B cell (primary cell): ENCODE measurements at regions of chr15 and their contacts with region 1.

Region 1: GRCh38 chr15:60478566-60479360 is at the start of gene ICE2:
- DNase-seq: peak; percentile 95
- ATAC-seq: peak; percentile 93
- H3K4me3 ChIP-seq: peak within 1 kb of the TSS; percentile 76 to 97 (median 89)
- H3K4me3 Mint-ChIP-seq: peak within 1 kb of the TSS; percentile 99
- H3K27ac ChIP-seq: peak within 1 kb of the TSS; percentile 85 to 95
- H3K27ac Mint-ChIP-seq: peak within 1 kb of the TSS; percentile 97
- H3K4me1 ChIP-seq: peaks cover 23 to 28% of the 10 kb centered on the region in 2 donors
- H3K4me1 Mint-ChIP-seq: peaks cover 52% of the 10 kb centered on the region
- H3K27me3 ChIP-seq: no peaks in the 10 kb centered on the region
- H3K27me3 Mint-ChIP-seq: no peaks in the 10 kb centered on the region
- CTCF ChIP-seq: no peak
- total RNA-seq, gene ICE2: 65.9 and 71.2 TPM in 2 replicates

Region 2: DNA sequence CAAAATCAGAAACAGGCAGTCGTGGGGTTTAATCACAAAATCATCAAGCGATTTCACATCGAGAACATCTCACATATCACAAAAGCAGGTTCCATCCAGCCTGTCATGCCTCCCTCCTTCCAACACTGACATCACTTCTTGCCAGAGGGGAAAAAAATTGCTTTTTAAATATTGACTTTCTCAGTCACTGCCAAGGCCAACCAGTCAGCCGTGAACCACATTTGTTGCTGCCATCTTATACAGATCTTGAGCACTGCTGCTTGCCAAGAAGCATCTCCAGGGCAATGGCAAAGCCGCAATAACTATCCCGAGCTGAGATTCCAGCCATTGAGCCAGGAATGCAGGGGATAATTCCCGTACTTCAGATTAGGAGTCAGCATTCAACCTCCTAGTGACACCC is 255.6 kb before region 1 on chr15:
- CTCF ChIA-PET with region 1: no interaction called
- POLR2A ChIA-PET with region 1: no interaction called
- intact Hi-C with region 1: no loop called
- DNase-seq: no peak
- ATAC-seq: no peak
- H3K4me3 ChIP-seq: no peak overlapping the region
- H3K4me3 Mint-ChIP-seq: no peak overlapping the region
- H3K27ac ChIP-seq: no peak overlapping the region
- H3K27ac Mint-ChIP-seq: no peak overlapping the region
- H3K4me1 ChIP-seq: no peaks in the 10 kb centered on the region
- H3K4me1 Mint-ChIP-seq: no peaks in the 10 kb centered on the region
- H3K27me3 ChIP-seq: no peaks in the 10 kb centered on the region
- H3K27me3 Mint-ChIP-seq: peaks cover 12% of the 10 kb centered on the region
- CTCF ChIP-seq: no peak

Region 3: DNA sequence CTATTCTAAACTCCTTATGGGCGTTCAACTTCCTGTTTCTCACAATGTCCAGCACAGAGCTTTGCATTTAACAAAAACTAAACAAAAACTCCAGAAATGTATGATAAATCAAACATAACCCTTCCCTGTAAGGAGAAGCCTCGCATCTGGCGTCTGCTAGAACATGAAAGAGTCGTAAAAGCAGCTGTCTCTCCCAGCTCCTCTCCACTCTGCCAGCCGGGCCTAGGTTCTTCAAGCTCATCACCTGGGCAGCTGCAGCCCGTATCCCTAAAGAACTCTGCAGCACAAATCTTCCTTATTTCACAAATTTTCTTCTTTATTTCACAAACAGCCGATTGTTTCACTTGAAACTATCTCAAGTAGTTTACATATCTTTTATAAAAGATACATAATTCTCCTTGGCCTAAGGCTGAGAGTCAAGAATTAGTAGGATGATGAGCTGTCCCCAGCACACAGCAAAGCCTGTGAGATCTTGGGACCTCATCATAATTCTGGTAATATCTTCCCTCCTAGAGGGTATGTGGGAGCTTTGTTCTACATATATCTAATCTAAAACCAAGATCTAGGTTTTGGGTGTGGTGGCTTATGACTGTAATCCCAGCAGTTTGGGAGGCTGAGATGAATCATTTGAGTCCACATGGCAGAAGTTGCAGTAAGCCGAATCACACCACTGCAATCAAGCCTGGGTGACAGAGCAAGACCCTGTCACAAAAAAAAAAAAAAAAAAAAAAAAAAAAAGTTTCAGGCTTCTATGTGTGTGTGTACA is 116.3 kb before region 1 on chr15:
- CTCF ChIA-PET with region 1: interaction called, 4 read pairs
- POLR2A ChIA-PET with region 1: no interaction called
- intact Hi-C with region 1: loop called (anchors 1 kb)
- DNase-seq: no peak
- ATAC-seq: no peak
- H3K4me3 ChIP-seq: no peak overlapping the region
- H3K4me3 Mint-ChIP-seq: no peak overlapping the region
- H3K27ac ChIP-seq: no peak overlapping the region
- H3K27ac Mint-ChIP-seq: peak overlapping the region; percentile 22
- H3K4me1 ChIP-seq: no peaks in the 10 kb centered on the region
- H3K4me1 Mint-ChIP-seq: no peaks in the 10 kb centered on the region
- H3K27me3 ChIP-seq: no peaks in the 10 kb centered on the region
- H3K27me3 Mint-ChIP-seq: no peaks in the 10 kb centered on the region
- CTCF ChIP-seq: no peak

Region 4: GRCh38 chr15:60397772-60398445 is 80.9 kb before region 1 on chr15 and contains the start of gene ANXA2:
- CTCF ChIA-PET with region 1: interaction called, 4 read pairs
- POLR2A ChIA-PET with region 1: interaction called, 18 read pairs
- intact Hi-C with region 1: loop called (anchors 1 kb)
- DNase-seq: peak; percentile 83
- ATAC-seq: peak; percentile 79
- H3K4me3 ChIP-seq: peak within 1 kb of the TSS; percentile 42 to 82 (median 72)
- H3K4me3 Mint-ChIP-seq: peak within 1 kb of the TSS; percentile 96
- H3K27ac ChIP-seq: peak within 1 kb of the TSS; percentile 44 to 60
- H3K27ac Mint-ChIP-seq: peak within 1 kb of the TSS; percentile 97
- H3K4me1 ChIP-seq: peaks cover 12 to 21% of the 10 kb centered on the region in 2 donors
- H3K4me1 Mint-ChIP-seq: peaks cover 40% of the 10 kb centered on the region
- H3K27me3 ChIP-seq: no peaks in the 10 kb centered on the region
- H3K27me3 Mint-ChIP-seq: no peaks in the 10 kb centered on the region
- CTCF ChIP-seq: no peak
- total RNA-seq, gene ANXA2: 122 and 133 TPM in 2 replicates

Region 5: GRCh38 chr15:60496853-60497252 is 18.1 kb after region 1 on chr15:
- CTCF ChIA-PET with region 1: no interaction called
- POLR2A ChIA-PET with region 1: no interaction called
- intact Hi-C with region 1: no loop called
- DNase-seq: no peak
- ATAC-seq: no peak
- H3K4me3 ChIP-seq: no peak overlapping the region
- H3K4me3 Mint-ChIP-seq: no peak overlapping the region
- H3K27ac ChIP-seq: no peak overlapping the region
- H3K27ac Mint-ChIP-seq: no peak overlapping the region
- H3K4me1 ChIP-seq: no peaks in the 10 kb centered on the region
- H3K4me1 Mint-ChIP-seq: peaks cover 2% of the 10 kb centered on the region
- H3K27me3 ChIP-seq: no peaks in the 10 kb centered on the region
- H3K27me3 Mint-ChIP-seq: no peaks in the 10 kb centered on the region
- CTCF ChIP-seq: no peak

Region 6: GRCh38 chr15:60592371-60593169 is 113.8 kb after region 1 on chr15:
- CTCF ChIA-PET with region 1: no interaction called
- POLR2A ChIA-PET with region 1: no interaction called
- intact Hi-C with region 1: loop called (anchors 5 kb)
- DNase-seq: peak; percentile 83
- ATAC-seq: peak; percentile 86
- H3K4me3 ChIP-seq: peak overlapping the region in 4 of 5 experiments; percentile 38 to 70 (median 62)
- H3K4me3 Mint-ChIP-seq: peak overlapping the region; percentile 85
- H3K27ac ChIP-seq: no peak overlapping the region
- H3K27ac Mint-ChIP-seq: peak overlapping the region; percentile 70
- H3K4me1 ChIP-seq: peaks cover 11 to 13% of the 10 kb centered on the region in 2 donors
- H3K4me1 Mint-ChIP-seq: peaks cover 10% of the 10 kb centered on the region
- H3K27me3 ChIP-seq: peaks cover 0 to 33% (median 23%) of the 10 kb centered on the region in 4 experiments
- H3K27me3 Mint-ChIP-seq: peaks cover 41% of the 10 kb centered on the region
- CTCF ChIP-seq: peak; percentile 10